ENCODE measurements at regions of chr1 and their contacts with region 1.

Region 1: DNA sequence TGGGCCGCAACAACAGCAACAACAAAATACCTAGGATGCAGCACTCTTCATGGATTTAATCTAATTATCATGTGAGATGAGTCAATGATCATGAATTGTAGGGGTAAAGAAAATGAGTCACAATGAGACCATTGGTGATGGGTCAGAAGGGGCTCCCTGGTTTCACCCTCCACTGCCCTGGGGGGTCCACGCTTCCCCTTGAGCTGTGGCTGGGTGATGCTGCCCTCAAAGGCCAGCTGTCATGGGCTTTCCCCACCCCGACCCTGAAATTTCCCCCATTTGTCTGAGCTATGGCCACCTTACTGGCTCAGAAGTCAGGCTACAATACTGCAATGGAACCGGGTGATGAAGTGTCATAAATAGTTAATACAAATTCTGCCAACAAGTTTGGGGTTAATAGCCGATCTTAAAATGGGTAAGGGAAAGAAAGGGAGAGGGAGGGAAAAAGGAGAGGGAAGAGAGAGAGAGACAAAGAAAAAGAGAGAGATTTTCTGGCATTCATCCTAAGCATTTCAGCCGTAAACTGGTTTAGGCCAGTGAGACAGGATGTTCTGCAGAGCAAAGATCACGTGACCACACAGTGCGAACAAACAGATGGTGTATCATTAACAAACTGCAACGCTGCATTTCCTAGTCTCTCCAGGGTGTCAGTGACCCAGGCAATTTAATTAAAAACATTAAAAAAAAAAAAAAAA is 143.4 kb upstream of the ERRFI1 start:
- DNase-seq: peak in 7 of 9 donors; percentile 55 to 81 (median 72)
- ATAC-seq: peak; percentile 92
- H3K4me3 ChIP-seq: peak overlapping the region; percentile 26
- H3K4me3 Mint-ChIP-seq: peak overlapping the region; percentile 17 to 78 (median 69)
- H3K27ac ChIP-seq: peak overlapping the region; percentile 55
- H3K27ac Mint-ChIP-seq: peak overlapping the region; percentile 91 to 98 (median 97)
- H3K4me1 ChIP-seq: peaks cover 19 to 36% of the 10 kb centered on the region in 2 donors
- H3K4me1 Mint-ChIP-seq: peaks cover 16 to 59% (median 34%) of the 10 kb centered on the region in 7 donors
- H3K27me3 ChIP-seq: no peaks in the 10 kb centered on the region
- H3K27me3 Mint-ChIP-seq: no peaks in the 10 kb centered on the region

Region 2: DNA sequence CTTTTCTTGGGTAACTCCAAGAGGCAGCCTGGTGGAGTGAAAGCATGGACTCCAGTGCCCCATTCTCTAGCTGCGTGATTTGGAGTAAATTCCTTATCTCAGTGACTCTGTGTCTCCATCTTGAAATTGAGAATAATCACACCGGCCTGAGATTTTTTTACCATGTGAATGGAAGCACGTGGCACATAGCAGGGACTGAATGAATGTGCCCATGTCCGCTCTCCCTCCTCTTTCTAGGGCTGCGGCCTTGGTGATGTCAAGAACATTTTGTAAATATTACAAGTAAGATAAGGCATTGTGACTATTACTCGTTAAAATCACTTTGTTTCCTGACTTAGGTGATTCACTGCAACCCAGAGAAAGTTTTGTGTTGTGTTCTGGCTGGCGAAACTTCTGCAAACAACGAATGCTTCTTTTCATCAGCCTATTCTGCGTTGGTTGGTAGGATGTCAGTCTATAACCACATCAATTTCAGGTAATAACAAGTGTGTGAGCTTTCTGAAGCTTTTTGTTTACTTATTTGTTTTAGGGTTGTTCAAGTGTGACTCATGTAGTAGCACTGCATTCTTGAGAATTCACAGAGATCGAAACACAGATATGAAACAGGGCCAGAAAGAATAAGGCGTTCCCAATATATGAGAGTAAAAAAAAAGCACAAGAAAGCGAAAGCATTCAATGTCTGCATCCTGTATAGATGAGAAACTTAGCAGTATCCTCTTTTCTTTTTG is 12.7 kb after region 1 on chr1:
- CTCF ChIA-PET with region 1: interaction called, 5 read pairs
- POLR2A ChIA-PET with region 1: interaction called, 4 read pairs
- intact Hi-C with region 1: loop called (anchors 1 kb)
- DNase-seq: peak in 7 of 9 donors; percentile 29 to 78 (median 64)
- ATAC-seq: peak; percentile 90
- H3K4me3 ChIP-seq: peak overlapping the region; percentile 21
- H3K4me3 Mint-ChIP-seq: peak overlapping the region in 9 of 10 donors; percentile 36 to 76 (median 58)
- H3K27ac ChIP-seq: no peak overlapping the region
- H3K27ac Mint-ChIP-seq: peak overlapping the region; percentile 46 to 93 (median 80)
- H3K4me1 ChIP-seq: peaks cover 12 to 16% of the 10 kb centered on the region in 2 donors
- H3K4me1 Mint-ChIP-seq: peaks cover 0 to 21% (median 19%) of the 10 kb centered on the region in 7 donors
- H3K27me3 ChIP-seq: no peaks in the 10 kb centered on the region
- H3K27me3 Mint-ChIP-seq: peaks cover 0 to 3% (median 0%) of the 10 kb centered on the region in 5 donors

Measured in naive thymus-derived CD4-positive, alpha-beta T cell (primary cell).